ENCODE measurements at regions of chr5 and their contacts with region 1.

Region 1: GRCh38 chr5:165940541-165940940 is 2350.9 kb upstream of the WWC1 start:
- DNase-seq: no peak
- ATAC-seq: no peak
- H3K4me3 ChIP-seq: no peak overlapping the region
- H3K27ac ChIP-seq: no peak overlapping the region
- H3K4me1 ChIP-seq: no peaks in the 10 kb centered on the region
- H3K27me3 ChIP-seq: no peaks in the 10 kb centered on the region
- CTCF ChIP-seq: no peak

Region 2: GRCh38 chr5:165502893-165503691 is 437.4 kb before region 1 on chr5:
- intact Hi-C with region 1: loop called in 1 of 2 experiments (anchors 5 kb)
- DNase-seq: no peak
- ATAC-seq: no peak
- H3K4me3 ChIP-seq: no peak overlapping the region
- H3K27ac ChIP-seq: no peak overlapping the region
- H3K4me1 ChIP-seq: no peaks in the 10 kb centered on the region
- H3K27me3 ChIP-seq: no peaks in the 10 kb centered on the region
- CTCF ChIP-seq: no peak